IMR-90 (cell line): ENCODE measurements at regions of chr5 and their contacts with region 1.

Region 1: DNA sequence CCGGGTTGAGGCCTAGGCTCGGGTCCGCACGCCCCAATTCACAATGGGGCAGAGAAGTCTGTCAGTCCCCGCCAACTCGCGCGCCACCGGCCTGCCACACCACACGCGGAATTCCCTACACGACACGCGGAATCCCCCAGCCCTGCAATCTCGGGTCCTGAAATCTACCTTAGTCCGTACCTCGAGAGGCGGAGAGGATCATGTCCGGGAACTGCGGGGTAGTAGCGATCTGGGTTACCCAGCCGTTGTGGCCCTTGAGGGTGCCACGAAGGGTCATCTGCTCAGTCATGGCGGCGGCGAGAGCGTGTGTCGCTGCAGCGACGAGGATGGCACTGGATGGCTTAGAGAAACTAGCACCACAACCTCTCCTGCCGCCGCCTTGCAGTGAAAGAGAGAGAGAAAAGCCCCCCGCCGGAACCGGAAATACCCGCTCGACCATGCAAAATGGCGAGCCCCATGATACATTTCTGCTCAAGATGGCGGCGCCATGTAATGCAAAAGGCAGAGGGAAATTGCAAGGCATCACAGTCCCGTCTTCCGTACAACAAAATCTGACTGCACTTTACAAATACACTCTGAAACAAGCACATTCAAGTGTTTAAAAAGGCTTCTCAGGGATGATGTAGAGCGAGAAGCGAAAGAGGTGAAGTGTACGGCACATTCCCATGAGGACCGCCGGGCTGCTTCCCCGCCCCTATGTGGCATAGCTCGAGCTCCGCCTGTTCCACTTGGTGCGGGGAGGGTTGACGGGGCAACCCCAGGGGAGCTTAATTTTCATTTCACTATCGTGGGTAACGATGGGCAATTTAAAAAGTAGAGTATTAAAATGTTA is at the start of gene RACK1:
- DNase-seq: peak; percentile 85
- ATAC-seq: peak; percentile 67
- H3K4me3 ChIP-seq: peak within 1 kb of the TSS; percentile 85
- H3K27ac ChIP-seq: peak within 1 kb of the TSS; percentile 88
- H3K4me1 ChIP-seq: peaks cover 18% of the 10 kb centered on the region
- H3K27me3 ChIP-seq: no peaks in the 10 kb centered on the region
- CTCF ChIP-seq: no peak
- POLR2A ChIP-seq: peak; percentile 97
- RAD21 ChIP-seq: no peak
- total RNA-seq, gene RACK1: 5,432 and 9,350 TPM in 2 replicates

Region 2: DNA sequence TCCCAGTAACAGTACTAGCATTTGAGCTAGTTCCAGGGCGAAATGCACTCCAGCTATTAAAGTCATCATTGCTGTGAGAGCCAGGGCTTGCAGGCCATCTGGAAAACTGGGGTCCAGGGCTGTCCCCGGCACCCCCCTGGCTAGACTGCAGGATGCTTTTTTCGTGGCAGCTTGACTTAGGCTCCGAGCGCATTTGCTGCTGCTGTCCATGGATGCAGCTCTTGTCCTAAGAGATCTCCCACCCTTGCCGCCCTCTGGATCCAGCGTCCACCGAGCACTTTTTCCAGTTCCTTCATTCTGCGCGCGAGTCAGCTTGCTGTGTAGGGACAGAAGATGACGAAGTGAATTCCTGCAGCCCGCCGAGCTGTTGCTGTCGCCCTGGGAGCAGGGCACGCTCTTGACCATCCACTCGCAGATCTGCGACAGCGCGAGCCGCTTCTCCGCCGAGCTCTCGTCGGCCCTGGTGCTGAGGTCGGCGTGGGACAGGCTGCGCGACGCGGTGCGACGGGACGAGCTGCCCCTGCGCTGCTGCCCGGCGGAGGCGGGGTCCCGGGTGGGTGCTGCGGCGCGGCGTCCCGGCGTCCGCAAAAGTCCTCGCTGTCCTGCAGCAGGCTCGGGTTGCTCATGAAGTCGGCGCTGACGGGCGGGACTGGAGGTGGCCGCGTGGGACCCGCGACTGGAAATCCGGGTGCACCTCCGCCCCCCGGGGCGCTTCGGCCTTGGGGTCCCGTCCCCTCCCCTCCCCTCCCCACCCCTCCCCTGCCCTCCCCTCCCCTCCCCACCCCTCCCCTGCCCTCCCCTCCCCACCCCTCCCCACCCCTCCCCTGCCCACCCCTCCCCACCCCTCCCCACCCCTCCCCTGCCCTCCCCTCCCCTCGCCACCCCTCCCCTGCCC is 143.4 kb before region 1 on chr5:
- CTCF ChIA-PET with region 1: no interaction called
- POLR2A ChIA-PET with region 1: no interaction called
- dilution Hi-C with region 1: no loop called
- in situ Hi-C with region 1: no loop called
- intact Hi-C with region 1: no loop called
- DNase-seq: no peak
- ATAC-seq: no peak
- H3K4me3 ChIP-seq: peak overlapping the region; percentile 36; the same call in 1 of the 2 replicates
- H3K27ac ChIP-seq: no peak overlapping the region
- H3K4me1 ChIP-seq: 0 out of 2 replicates have a peak, but pooled peaks cover 2% of the 10 kb centered on the region
- H3K27me3 ChIP-seq: peaks cover 16% of the 10 kb centered on the region; the same call in 1 of the 2 replicates
- CTCF ChIP-seq: no peak
- POLR2A ChIP-seq: no peak
- RAD21 ChIP-seq: no peak

Region 3: DNA sequence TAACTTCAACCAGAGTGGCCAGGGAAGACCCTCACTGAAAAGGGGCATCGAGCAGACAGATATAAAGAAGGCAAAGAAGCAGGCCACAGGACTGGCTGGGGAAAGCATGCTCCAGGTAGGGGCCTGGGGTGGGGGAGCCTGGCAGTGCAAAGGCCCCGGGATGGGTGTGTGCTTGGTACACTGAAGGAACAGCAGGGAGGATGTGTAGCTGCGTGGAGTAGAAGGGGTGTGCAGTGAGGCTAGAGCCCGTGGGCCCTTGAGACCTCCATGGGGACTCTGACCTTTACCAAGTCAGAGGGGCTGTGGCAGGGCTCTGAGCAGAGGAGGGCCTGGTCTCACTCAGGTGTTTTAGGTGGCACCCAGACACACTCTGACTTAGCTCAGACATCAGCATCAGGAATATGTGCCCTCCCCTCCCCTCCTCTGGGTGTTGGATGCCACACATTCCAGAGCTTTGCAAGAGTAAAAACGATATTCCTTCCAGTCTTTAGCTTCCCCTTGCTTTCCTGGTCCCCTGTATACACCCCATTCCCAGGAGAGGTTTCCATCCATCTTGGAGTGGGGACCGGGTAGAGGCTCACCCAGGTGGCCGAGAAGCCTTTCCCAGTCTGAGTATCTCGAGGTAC is 46.3 kb before region 1 on chr5:
- CTCF ChIA-PET with region 1: no interaction called
- POLR2A ChIA-PET with region 1: no interaction called
- dilution Hi-C with region 1: no loop called
- in situ Hi-C with region 1: no loop called
- intact Hi-C with region 1: no loop called
- DNase-seq: no peak
- ATAC-seq: peak; percentile 63
- H3K4me3 ChIP-seq: no peak overlapping the region
- H3K27ac ChIP-seq: no peak overlapping the region
- H3K4me1 ChIP-seq: peaks cover 2% of the 10 kb centered on the region
- H3K27me3 ChIP-seq: no peaks in the 10 kb centered on the region; the same call in 1 of the 2 replicates
- CTCF ChIP-seq: no peak
- POLR2A ChIP-seq: no peak
- RAD21 ChIP-seq: no peak

Region 4: GRCh38 chr5:181207214-181208107 is 36.3 kb before region 1 on chr5:
- CTCF ChIA-PET with region 1: no interaction called
- POLR2A ChIA-PET with region 1: no interaction called
- dilution Hi-C with region 1: no loop called
- in situ Hi-C with region 1: no loop called
- intact Hi-C with region 1: loop called (anchors 1 kb)
- DNase-seq: peak; percentile 93
- ATAC-seq: peak; percentile 77
- H3K4me3 ChIP-seq: peak overlapping the region; percentile 72
- H3K27ac ChIP-seq: peak overlapping the region; percentile 42
- H3K4me1 ChIP-seq: peaks cover 4% of the 10 kb centered on the region; the same call in 1 of the 2 replicates
- H3K27me3 ChIP-seq: no peaks in the 10 kb centered on the region; the same call in 1 of the 2 replicates
- CTCF ChIP-seq: no peak
- POLR2A ChIP-seq: no peak
- RAD21 ChIP-seq: no peak

Region 5: DNA sequence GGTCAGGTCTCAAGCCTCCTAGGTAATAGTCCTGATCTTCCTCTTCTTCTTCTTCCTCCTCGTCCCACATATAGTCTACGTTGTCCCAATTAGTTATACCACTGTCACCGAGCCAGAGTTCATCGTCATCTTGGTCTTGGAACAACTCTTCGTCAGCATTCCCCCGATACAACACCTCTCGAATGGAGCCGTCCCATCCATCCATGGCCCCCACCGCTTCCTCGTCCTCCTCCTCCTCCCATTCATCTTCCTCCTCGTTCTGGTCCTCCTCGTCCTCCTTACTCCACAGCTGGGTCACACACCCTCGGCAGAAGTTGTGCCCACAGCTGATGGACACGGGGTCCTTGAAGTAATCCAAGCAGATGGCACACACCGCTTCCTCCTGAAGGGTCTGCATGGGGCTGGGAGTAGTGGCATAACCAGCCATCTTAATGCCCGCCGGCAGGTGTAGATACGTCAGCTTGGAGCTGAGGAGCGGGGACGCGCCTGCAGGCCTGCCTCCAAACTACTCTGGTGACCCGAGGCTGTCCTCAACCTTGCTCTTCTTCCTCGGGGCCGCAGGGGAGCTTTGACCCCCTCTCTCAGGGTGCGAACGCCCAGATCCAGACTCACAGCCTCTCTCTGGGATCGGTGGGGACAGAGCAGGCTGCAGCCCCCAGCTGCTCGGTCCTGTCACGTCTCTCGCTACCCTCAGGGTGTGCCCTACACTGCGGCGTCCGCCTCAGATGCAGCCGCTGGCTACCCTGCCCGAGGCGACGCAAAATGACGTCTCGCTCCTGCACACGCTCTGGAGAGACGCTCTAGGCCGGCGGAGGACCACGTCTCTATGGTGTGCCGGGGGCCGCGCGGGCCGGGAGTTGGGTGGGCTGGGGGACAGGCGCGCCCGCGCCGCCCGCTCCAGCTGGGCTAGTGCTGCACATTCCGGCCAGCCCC is 16.9 kb after region 1 on chr5 and contains the start of gene TRIM52:
- CTCF ChIA-PET with region 1: interaction called, 5 read pairs
- POLR2A ChIA-PET with region 1: no interaction called
- dilution Hi-C with region 1: no loop called
- in situ Hi-C with region 1: no loop called
- intact Hi-C with region 1: loop called (anchors 1 kb)
- DNase-seq: peak; percentile 87
- ATAC-seq: peak; percentile 87
- H3K4me3 ChIP-seq: peak within 1 kb of the TSS; percentile 95
- H3K27ac ChIP-seq: peak within 1 kb of the TSS; percentile 97
- H3K4me1 ChIP-seq: peaks cover 2% of the 10 kb centered on the region; the same call in 1 of the 2 replicates
- H3K27me3 ChIP-seq: no peaks in the 10 kb centered on the region
- CTCF ChIP-seq: 0 out of 2 replicates have a peak, but pooled peaks have one; percentile 1
- POLR2A ChIP-seq: peak; percentile 77; the same call in 1 of the 2 replicates
- RAD21 ChIP-seq: no peak; the same call in 1 of the 2 replicates
- total RNA-seq, gene TRIM52: 2.3 and 3.9 TPM in 2 replicates